ENCODE measurements at regions of chr2 and their contacts with region 1.

Region 1: DNA sequence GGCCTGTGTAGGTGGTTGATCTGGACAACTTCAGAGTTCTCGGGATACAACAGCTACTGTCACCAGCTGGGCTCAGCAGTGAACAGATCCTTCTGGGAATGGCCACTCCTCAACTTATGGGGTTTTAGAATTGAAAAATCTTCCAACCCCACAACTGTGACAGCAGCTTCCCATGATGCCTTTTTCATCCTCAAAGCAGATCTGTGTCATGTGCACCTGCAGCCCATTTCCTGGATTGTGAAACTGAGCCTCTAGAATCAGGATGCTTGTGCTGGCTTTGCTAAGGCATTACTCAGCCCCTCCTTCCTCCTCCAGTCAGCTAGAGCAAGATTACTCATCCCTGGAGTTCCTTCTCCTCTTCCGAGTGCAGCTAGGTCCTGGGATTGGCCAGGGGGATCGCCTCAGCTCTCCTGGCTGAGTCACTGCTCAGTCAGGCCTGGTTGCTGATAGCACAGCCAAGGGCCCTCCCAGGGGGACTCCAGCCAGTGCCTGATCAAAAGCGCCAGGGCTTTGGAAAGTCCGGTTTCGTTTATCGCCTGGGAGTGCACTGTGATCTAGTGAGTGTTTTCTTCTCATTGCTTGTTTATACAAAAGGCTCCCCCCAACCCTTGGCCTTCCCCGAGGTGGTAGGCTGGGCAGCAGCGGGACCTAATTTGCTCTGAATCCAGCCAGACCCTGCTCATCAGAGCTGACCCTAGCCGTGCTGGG is 2.4 kb upstream of the LPIN1 start:
- DNase-seq: peak; percentile 49
- ATAC-seq: no peak
- H3K4me3 Mint-ChIP-seq: peak overlapping the region; percentile 65
- H3K27ac Mint-ChIP-seq: peak overlapping the region; percentile 85
- H3K4me1 Mint-ChIP-seq: peaks cover 41% of the 10 kb centered on the region
- H3K27me3 Mint-ChIP-seq: peaks cover 2% of the 10 kb centered on the region

Region 2: DNA sequence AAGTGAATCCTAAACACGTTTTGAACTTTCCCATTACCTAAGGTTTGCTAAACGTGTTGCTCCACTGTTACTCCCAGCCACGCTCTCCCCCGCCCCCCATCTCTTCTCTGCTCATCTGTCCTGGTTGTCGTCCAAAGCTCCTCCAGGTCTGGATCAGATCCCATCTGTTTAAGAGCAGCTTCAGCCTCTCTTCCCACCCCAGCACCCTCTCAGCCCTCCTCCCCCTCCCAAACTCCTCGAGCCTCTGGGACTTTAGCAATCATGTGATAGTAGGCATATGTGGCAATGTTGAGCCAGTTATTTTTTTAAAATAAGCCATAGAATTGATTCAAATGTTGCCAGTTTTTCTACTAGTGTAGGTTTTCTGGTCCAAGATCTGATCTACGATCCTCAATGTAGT is 17.6 kb before region 1 on chr2:
- POLR2A ChIA-PET with region 1: no interaction called
- DNase-seq: no peak
- ATAC-seq: no peak
- H3K4me3 Mint-ChIP-seq: no peak overlapping the region
- H3K27ac Mint-ChIP-seq: no peak overlapping the region
- H3K4me1 Mint-ChIP-seq: no peaks in the 10 kb centered on the region
- H3K27me3 Mint-ChIP-seq: peaks cover 22% of the 10 kb centered on the region

Region 3: DNA sequence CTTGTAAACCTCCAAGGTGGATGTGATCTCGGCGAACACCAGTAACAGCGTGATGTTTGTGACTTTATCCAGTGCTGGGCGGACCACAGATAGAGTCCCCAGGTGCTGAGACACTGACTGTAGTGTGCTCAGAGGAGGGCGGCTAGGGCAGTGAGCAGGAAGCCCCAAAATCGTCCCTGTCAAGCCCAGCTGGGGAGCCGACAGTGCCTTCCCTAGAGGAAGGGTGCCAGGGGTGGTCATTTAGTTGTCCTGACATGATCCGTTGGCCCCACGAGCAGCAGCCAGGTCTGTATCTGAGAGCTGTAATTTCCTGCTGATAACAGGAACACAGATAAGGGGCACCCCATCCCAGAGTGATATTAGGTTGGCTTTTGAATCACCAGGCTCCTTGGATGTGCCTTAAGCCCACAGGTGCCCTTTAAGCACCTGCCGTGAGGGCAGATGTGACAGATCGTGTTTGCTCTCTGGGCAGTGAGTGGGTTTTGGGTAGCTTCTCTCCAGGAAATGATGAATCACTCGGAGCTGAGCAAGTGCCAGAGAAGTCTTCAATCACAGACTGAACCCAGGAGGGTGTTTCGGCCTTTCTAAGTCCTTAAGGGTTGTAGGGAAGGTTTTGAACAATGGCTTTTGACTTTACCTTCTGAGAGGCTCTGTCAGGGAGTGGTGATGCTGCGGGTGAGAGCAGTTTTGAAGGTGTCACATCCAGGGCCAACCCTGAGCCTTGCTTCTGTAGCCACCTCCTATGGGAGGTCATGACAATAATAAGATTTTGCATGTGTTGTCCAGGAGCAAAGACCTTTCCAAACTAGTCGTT is 10.1 kb after region 1 on chr2:
- POLR2A ChIA-PET with region 1: interaction called, 10 read pairs
- DNase-seq: peak; percentile 57
- ATAC-seq: peak; percentile 66
- H3K4me3 Mint-ChIP-seq: peak overlapping the region; percentile 72
- H3K27ac Mint-ChIP-seq: peak overlapping the region; percentile 85
- H3K4me1 Mint-ChIP-seq: peaks cover 72% of the 10 kb centered on the region
- H3K27me3 Mint-ChIP-seq: no peaks in the 10 kb centered on the region